CD4-positive, alpha-beta memory T cell (primary cell): ENCODE measurements at regions of chr9 and their contacts with region 1.

Region 1: DNA sequence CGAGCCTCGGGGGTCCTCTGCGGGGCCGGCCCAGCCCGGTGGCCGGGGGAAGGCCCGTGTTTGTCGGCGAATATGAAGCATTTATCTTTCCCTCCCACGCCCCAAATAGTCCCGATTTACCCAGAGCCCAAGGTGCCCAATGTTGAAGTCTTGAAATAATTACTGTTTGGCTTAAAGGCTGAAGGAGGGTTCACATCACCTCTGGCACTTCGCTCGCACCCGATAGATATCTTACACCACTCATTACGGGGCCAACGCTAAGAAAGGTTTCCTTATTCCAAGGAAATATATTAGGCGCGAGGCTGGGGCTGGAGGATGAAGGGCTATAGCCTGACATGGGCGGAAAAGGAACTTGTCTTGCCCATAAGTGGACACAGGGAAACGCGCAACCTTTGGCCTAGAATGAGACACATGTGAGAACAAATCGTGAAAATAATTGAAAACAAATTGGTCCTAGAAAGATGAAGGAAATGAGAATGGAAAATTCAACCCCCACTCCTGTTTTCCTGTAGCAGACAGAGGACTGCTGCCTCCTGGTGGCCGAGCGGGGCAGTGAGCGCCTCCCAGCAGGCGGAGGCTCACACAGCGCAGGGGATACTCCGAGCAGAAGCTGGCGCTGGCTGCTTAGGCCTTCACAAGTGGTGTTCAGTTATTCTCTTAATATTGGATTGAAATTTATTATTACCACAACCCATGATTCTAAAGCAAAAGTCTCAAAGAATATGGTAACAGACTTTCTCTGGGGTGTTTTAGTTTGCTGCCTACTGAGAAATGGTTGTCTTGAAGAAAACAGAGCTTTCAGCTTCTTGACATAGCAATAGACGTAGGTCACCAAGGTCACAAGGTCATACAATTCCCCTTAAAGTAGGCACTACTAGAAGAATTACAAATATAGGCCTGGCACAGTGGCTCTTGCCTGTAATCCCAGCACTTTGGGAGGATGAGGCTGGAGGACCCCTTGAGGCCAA is 7.9 kb downstream of the CCL21 start:
- DNase-seq: peak; percentile 71 to 74 (median 72)
- H3K4me3 ChIP-seq: peak overlapping the region; percentile 54 to 93
- H3K4me3 Mint-ChIP-seq: peak overlapping the region; percentile 81 to 88 (median 86)
- H3K27ac ChIP-seq: no peak overlapping the region
- H3K27ac Mint-ChIP-seq: peak overlapping the region in 6 of 7 donors; percentile 37 to 70 (median 50)
- H3K4me1 ChIP-seq: peaks cover 7% of the 10 kb centered on the region
- H3K4me1 Mint-ChIP-seq: peaks cover 1 to 9% (median 6%) of the 10 kb centered on the region in 4 donors
- H3K27me3 ChIP-seq: no peaks in the 10 kb centered on the region
- H3K27me3 Mint-ChIP-seq: no peaks in the 10 kb centered on the region

Region 2: GRCh38 chr9:33690143-33690933 is 1011.7 kb before region 1 on chr9:
- CTCF ChIA-PET with region 1: no interaction called
- POLR2A ChIA-PET with region 1: no interaction called
- intact Hi-C with region 1: no loop called
- DNase-seq: no peak
- H3K4me3 ChIP-seq: no peak overlapping the region
- H3K4me3 Mint-ChIP-seq: no peak overlapping the region
- H3K27ac ChIP-seq: no peak overlapping the region
- H3K27ac Mint-ChIP-seq: no peak overlapping the region
- H3K4me1 ChIP-seq: no peaks in the 10 kb centered on the region
- H3K4me1 Mint-ChIP-seq: peaks cover 0 to 11% (median 0%) of the 10 kb centered on the region in 4 donors
- H3K27me3 ChIP-seq: no peaks in the 10 kb centered on the region
- H3K27me3 Mint-ChIP-seq: peaks cover 19 to 35% of the 10 kb centered on the region in 2 donors

Region 3: GRCh38 chr9:34171753-34172535 is 530.1 kb before region 1 on chr9:
- CTCF ChIA-PET with region 1: no interaction called
- POLR2A ChIA-PET with region 1: no interaction called
- intact Hi-C with region 1: no loop called
- DNase-seq: peak; percentile 30 to 70 (median 62)
- H3K4me3 ChIP-seq: no peak overlapping the region
- H3K4me3 Mint-ChIP-seq: peak overlapping the region; percentile 39 to 87 (median 68)
- H3K27ac ChIP-seq: no peak overlapping the region
- H3K27ac Mint-ChIP-seq: peak overlapping the region in 6 of 7 donors; percentile 18 to 88 (median 84)
- H3K4me1 ChIP-seq: peaks cover 12% of the 10 kb centered on the region
- H3K4me1 Mint-ChIP-seq: peaks cover 2 to 12% (median 7%) of the 10 kb centered on the region in 4 donors
- H3K27me3 ChIP-seq: no peaks in the 10 kb centered on the region
- H3K27me3 Mint-ChIP-seq: no peaks in the 10 kb centered on the region

Region 4: DNA sequence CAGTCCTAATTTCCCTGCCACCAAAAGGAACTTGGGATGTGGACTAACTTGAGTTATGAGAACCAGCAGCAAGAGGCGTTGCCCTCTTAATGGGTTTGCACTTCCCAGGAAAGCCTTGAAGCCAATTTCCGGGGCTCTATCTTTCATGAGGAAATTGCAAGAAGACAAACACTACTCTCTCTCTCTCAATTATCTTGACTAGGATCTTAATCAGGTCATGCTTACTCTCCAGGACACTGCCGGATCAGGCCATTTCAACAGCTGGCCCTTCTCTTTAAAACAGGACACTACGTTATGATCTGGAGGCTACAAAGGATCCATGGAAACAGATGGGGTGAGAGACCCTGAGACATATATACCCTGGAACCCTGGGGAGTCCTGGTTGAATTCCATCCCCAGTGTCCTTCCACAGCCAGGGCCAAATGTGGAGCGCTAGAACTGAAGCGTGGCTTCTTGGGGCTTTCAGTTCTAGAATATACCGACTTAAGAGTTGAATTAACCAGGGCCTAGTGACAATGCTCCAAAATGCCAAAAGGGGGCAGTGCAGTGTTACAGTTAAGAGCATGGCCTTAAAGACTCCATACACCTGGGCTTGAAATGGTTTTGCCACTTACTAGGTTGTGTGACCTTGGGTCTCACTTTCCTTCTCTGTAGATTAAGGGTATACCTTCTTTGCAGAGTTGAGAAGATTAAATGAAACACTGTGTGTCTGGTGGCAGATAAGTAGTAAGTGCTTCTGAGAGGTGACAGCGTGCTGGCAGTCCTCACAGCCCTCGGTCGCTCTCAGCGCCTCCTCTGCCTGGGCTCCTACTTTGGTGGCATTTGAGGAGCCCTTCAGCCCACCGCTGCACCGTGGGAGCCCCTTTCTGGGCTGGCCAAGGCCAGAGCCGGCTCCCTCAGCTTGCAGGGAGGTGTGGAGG is 264.8 kb before region 1 on chr9:
- CTCF ChIA-PET with region 1: interaction called, 3 read pairs
- POLR2A ChIA-PET with region 1: no interaction called
- intact Hi-C with region 1: loop called (anchors 5 kb)
- DNase-seq: peak; percentile 65 to 69 (median 67)
- H3K4me3 ChIP-seq: no peak overlapping the region
- H3K4me3 Mint-ChIP-seq: no peak overlapping the region
- H3K27ac ChIP-seq: no peak overlapping the region
- H3K27ac Mint-ChIP-seq: no peak overlapping the region
- H3K4me1 ChIP-seq: peaks cover 11% of the 10 kb centered on the region
- H3K4me1 Mint-ChIP-seq: peaks cover 12 to 18% (median 13%) of the 10 kb centered on the region in 4 donors
- H3K27me3 ChIP-seq: no peaks in the 10 kb centered on the region
- H3K27me3 Mint-ChIP-seq: no peaks in the 10 kb centered on the region

Region 5: DNA sequence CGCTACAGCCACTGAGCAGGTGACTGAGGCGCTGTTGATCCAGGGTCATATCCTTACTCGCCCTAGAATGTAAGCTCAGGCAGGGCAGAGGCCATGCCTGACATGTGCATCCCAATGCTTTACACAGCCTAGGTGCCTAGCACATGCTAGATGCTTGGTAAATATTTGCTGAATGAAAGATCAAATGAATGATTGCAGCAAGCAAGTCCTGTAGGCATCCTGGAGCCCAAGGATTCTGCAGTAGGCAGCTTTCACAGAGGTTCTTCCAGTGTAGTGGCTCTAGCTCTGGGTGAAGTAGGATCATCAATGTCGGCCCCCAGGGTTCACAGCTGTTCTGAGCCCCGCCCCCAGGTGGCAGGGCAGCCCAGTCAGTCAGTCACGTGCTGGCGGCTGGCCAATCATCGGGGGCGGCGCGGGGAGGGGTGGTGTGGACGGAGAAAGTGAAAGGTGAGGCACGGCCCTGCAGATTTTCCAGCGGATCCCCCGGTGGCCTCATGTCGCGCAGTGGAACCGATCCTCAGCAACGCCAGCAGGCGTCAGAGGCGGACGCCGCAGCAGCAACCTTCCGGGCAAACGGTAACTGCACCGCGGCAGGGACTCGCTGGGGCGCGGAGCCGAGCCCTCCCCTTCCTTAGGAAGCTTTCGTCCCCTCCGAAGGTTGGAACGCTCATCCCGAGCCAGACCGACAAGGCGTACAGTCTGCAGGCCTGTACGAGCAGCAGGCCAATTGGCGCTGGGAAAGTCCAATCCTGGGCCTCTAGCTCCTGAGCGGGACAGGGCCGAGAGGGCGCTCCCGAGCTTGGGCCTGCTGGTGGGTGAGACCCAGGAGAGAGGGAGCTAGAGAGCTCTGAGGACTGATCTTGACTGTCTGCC is 55.6 kb before region 1 on chr9 and contains the start of gene GALT:
- CTCF ChIA-PET with region 1: interaction called, 60 read pairs
- POLR2A ChIA-PET with region 1: interaction called, 10 read pairs
- intact Hi-C with region 1: loop called (anchors 1 kb)
- DNase-seq: peak; percentile 92 to 96 (median 94)
- H3K4me3 ChIP-seq: peak within 1 kb of the TSS; percentile 83 to 87
- H3K4me3 Mint-ChIP-seq: peak within 1 kb of the TSS; percentile 93 to 97 (median 95)
- H3K27ac ChIP-seq: peak within 1 kb of the TSS; percentile 84
- H3K27ac Mint-ChIP-seq: peak within 1 kb of the TSS; percentile 89 to 96 (median 93)
- H3K4me1 ChIP-seq: peaks cover 28% of the 10 kb centered on the region
- H3K4me1 Mint-ChIP-seq: peaks cover 23 to 49% (median 31%) of the 10 kb centered on the region in 4 donors
- H3K27me3 ChIP-seq: no peaks in the 10 kb centered on the region
- H3K27me3 Mint-ChIP-seq: no peaks in the 10 kb centered on the region
- total RNA-seq, gene GALT: 251 to 261 TPM

Region 6: DNA sequence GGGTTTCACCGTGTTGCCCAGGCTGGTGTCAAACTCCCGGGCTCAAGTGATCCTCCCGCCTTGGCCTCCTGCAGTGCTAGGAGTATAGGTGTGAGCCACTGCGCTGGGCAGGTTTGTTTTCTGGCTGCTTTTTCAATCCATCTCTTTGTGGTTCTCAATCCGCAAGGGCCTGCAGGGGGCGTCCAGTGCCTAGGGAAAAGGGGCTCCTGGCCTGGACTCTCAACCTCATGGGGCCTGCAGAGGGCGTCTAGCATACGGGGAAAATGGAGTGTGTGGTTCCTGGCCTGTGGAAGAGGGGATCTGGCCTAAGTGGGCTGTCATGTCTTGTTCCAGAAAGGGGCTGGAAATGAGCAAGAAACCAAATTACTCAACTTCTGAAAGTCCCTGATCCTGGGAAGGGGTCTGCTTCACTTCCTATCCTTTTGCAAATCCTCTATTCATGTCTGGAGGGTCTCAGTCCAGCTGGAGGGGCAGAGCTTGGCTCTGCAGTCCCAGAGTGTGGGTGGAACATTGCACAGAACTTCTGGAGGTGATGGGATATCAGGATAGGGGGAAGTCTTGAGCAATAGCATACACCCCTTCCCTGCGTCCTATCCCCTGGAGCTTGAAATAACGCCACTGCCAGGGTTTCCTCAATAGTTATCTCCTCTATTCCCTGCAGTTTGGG is 26.9 kb before region 1 on chr9:
- CTCF ChIA-PET with region 1: interaction called, 16 read pairs
- POLR2A ChIA-PET with region 1: no interaction called
- intact Hi-C with region 1: loop called (anchors 1 kb)
- DNase-seq: peak in 4 of 5 donors; percentile 30 to 36 (median 34)
- H3K4me3 ChIP-seq: no peak overlapping the region
- H3K4me3 Mint-ChIP-seq: no peak overlapping the region
- H3K27ac ChIP-seq: no peak overlapping the region
- H3K27ac Mint-ChIP-seq: no peak overlapping the region
- H3K4me1 ChIP-seq: no peaks in the 10 kb centered on the region
- H3K4me1 Mint-ChIP-seq: peaks cover 0 to 4% (median under 1%) of the 10 kb centered on the region in 4 donors
- H3K27me3 ChIP-seq: no peaks in the 10 kb centered on the region
- H3K27me3 Mint-ChIP-seq: no peaks in the 10 kb centered on the region

Region 7: GRCh38 chr9:34690983-34691935 is 10.8 kb before region 1 on chr9 and contains the start of gene CCL19:
- CTCF ChIA-PET with region 1: interaction called, 16 read pairs
- POLR2A ChIA-PET with region 1: no interaction called
- intact Hi-C with region 1: no loop called
- DNase-seq: no peak
- H3K4me3 ChIP-seq: no peak within 1 kb of the TSS
- H3K4me3 Mint-ChIP-seq: no peak within 1 kb of the TSS
- H3K27ac ChIP-seq: no peak within 1 kb of the TSS
- H3K27ac Mint-ChIP-seq: peak within 1 kb of the TSS in 1 of 7 donors; percentile 73
- H3K4me1 ChIP-seq: no peaks in the 10 kb centered on the region
- H3K4me1 Mint-ChIP-seq: no peaks in the 10 kb centered on the region
- H3K27me3 ChIP-seq: no peaks in the 10 kb centered on the region
- H3K27me3 Mint-ChIP-seq: no peaks in the 10 kb centered on the region
- total RNA-seq, gene CCL19: not detected

Region 8: DNA sequence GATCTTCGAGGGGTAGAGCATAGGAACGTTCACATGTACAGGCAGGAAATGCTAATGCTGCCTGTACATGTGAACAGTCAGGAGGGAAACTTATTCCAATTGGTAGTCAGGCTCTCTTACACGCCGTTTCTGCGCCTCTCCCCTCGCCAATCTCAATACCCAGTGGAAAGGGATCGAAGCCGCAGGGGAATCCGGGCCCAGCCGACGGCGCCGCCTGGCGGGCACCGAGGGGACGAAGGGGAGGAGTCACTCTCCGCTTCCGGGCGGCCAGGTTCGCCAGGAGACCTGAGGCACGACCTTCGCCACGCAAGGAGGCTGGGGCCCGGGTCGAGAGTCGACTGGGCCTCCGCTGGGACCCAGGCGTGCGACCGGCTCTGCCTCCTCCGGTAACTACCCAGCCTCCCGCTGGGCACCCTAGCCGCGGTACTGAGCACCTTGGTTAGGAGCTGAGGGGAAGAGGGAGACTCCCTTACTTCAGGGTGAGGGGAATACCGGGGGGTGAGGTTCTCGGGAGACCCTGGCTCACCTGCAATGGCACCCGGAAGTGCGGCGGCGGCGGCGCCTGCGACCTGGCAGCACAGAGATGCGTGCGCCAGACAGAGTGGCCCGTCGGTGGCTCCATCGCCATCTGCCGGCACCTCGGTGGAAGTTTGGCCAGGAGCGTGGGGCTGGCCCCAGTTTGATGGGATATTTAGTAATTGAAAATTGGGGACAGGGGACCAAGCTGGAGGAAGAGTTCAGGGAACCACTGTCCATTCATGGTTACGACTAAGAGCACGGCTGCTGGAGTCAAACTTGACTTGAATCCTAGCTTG is 394.2 kb after region 1 on chr9 and contains the start of gene PIGO:
- CTCF ChIA-PET with region 1: no interaction called
- POLR2A ChIA-PET with region 1: no interaction called
- intact Hi-C with region 1: loop called (anchors 5 kb)
- DNase-seq: peak; percentile 89 to 92 (median 92)
- H3K4me3 ChIP-seq: peak within 1 kb of the TSS; percentile 87
- H3K4me3 Mint-ChIP-seq: peak within 1 kb of the TSS; percentile 85 to 91 (median 86)
- H3K27ac ChIP-seq: peak within 1 kb of the TSS; percentile 92
- H3K27ac Mint-ChIP-seq: peak within 1 kb of the TSS; percentile 91 to 99 (median 94)
- H3K4me1 ChIP-seq: peaks cover 15% of the 10 kb centered on the region
- H3K4me1 Mint-ChIP-seq: peaks cover 17 to 60% (median 34%) of the 10 kb centered on the region in 4 donors
- H3K27me3 ChIP-seq: no peaks in the 10 kb centered on the region
- H3K27me3 Mint-ChIP-seq: no peaks in the 10 kb centered on the region
- total RNA-seq, gene PIGO: 23.4 to 29.7 TPM